Gastrocnemius medialis (tissue), 4 donors: ENCODE measurements at regions of chr21 and their contacts with region 1.

Region 1: DNA sequence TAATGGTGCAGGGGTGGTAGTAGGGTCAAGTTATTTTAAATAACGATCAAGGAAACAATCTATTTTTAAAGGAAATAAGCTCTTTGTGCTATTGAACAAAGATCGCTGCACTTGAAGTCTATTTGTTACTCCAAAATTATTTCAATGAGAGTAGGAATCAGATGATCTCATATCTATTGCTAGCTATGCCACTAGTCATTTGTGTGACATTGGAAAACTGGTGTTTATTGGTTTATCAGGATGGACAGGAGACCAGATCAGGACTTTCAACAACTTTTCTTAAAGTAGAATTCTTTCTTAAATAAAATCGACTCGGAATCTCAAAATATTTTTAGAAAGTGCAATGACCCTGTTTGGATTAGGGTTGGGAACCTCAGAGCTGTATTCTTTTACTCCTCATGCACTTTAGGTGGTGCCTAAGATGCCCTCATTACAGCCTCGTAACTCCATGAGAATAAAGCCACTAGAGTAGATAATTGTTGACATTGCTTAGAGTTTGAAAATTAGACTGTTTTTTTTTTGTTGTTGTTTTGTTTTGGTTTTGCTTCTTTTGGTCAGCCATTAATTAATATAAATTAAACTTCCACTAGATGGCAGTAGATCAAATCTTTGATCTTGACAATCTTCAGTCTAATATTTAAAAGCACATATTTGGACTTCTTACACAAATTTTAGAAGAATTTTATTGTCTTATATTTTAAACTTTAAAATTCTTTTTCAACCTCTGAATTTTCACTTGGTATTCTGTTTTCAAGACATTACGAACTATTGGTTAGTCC is 352.4 kb downstream of the USP25 start:
- DNase-seq: no peak
- ATAC-seq: no peak
- H3K4me3 ChIP-seq: peak overlapping the region in 1 of 4 donors; percentile 0
- H3K27ac ChIP-seq: no peak overlapping the region
- H3K4me1 ChIP-seq: peaks cover 3 to 4% of the 10 kb centered on the region in 2 donors
- H3K27me3 ChIP-seq: no peaks in the 10 kb centered on the region
- CTCF ChIP-seq: peak in 4 of 5 experiments; percentile 29 to 61 (median 46)
- POLR2A ChIP-seq: no peak

Region 2: GRCh38 chr21:15729674-15730483 is 352.3 kb before region 1 on chr21 and contains the start of gene USP25:
- in situ Hi-C with region 1: no loop called
- intact Hi-C with region 1: loop called (anchors 10 kb)
- DNase-seq: peak; percentile 91 to 93
- ATAC-seq: peak; percentile 86
- H3K4me3 ChIP-seq: peak within 1 kb of the TSS; percentile 60 to 83 (median 78)
- H3K27ac ChIP-seq: peak within 1 kb of the TSS; percentile 92 to 95 (median 94)
- H3K4me1 ChIP-seq: peaks cover 13 to 22% of the 10 kb centered on the region in 2 donors
- H3K27me3 ChIP-seq: no peaks in the 10 kb centered on the region
- CTCF ChIP-seq: peak in 3 of 5 experiments; percentile 16 to 42 (median 28)
- POLR2A ChIP-seq: peak; percentile 87 to 95
- total RNA-seq, gene USP25: 99.4 to 130 (median 107) TPM

Region 3: GRCh38 chr21:16323596-16323995 is 241.4 kb after region 1 on chr21:
- in situ Hi-C with region 1: loop called in 3 of 4 experiments (anchors 5 to 10 kb)
- intact Hi-C with region 1: no loop called
- DNase-seq: no peak
- ATAC-seq: no peak
- H3K4me3 ChIP-seq: no peak overlapping the region
- H3K27ac ChIP-seq: no peak overlapping the region
- H3K4me1 ChIP-seq: peaks cover 0 to 6% of the 10 kb centered on the region in 2 donors
- H3K27me3 ChIP-seq: no peaks in the 10 kb centered on the region
- CTCF ChIP-seq: no peak
- POLR2A ChIP-seq: no peak

Region 4: GRCh38 chr21:16388911-16389515 is 306.8 kb after region 1 on chr21:
- in situ Hi-C with region 1: no loop called
- intact Hi-C with region 1: no loop called
- DNase-seq: no peak
- ATAC-seq: no peak
- H3K4me3 ChIP-seq: no peak overlapping the region
- H3K27ac ChIP-seq: no peak overlapping the region
- H3K4me1 ChIP-seq: no peaks in the 10 kb centered on the region
- H3K27me3 ChIP-seq: no peaks in the 10 kb centered on the region
- CTCF ChIP-seq: no peak
- POLR2A ChIP-seq: no peak

Region 5: GRCh38 chr21:16419188-16419921 is 337.1 kb after region 1 on chr21:
- in situ Hi-C with region 1: no loop called
- intact Hi-C with region 1: loop called (anchors 10 kb)
- DNase-seq: peak; percentile 52 to 59
- ATAC-seq: peak; percentile 64 to 66
- H3K4me3 ChIP-seq: peak overlapping the region; percentile 51 to 60 (median 56)
- H3K27ac ChIP-seq: peak overlapping the region; percentile 86 to 91 (median 90)
- H3K4me1 ChIP-seq: peaks cover 4 to 15% of the 10 kb centered on the region in 2 donors
- H3K27me3 ChIP-seq: no peaks in the 10 kb centered on the region
- CTCF ChIP-seq: no peak
- POLR2A ChIP-seq: no peak

Region 6: GRCh38 chr21:16588433-16588860 is 506.2 kb after region 1 on chr21:
- in situ Hi-C with region 1: loop called in 1 of 4 experiments (anchors 25 kb)
- intact Hi-C with region 1: no loop called
- DNase-seq: peak; percentile 63 to 73
- ATAC-seq: peak; percentile 71 to 72
- H3K4me3 ChIP-seq: peak overlapping the region; percentile 47 to 55 (median 50)
- H3K27ac ChIP-seq: peak overlapping the region; percentile 74 to 80 (median 80)
- H3K4me1 ChIP-seq: peaks cover 13 to 18% of the 10 kb centered on the region in 2 donors
- H3K27me3 ChIP-seq: no peaks in the 10 kb centered on the region
- CTCF ChIP-seq: no peak
- POLR2A ChIP-seq: peak; percentile 44 to 50

Region 7: DNA sequence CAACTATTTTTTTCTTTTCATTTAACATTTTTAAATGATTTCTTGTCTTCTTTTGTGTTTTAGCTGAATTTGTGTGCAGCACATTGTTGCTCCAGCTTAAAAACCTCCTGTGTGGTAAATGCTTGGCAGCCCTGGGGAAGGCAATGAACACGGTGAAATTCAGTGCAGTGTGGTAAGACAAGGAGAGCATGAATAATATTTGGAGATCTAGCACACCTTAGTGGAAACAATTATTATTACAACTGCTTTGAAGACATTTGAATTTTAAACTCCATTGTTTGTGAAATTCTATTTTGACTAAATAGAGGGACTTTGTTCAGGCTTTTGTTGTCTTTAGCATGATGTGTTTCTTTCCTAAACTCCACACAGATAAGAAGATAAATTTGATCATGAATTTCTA is 1188.0 kb after region 1 on chr21:
- in situ Hi-C with region 1: no loop called
- intact Hi-C with region 1: loop called (anchors 2 kb)
- DNase-seq: peak in 1 of 2 donors; percentile 22
- ATAC-seq: peak; percentile 56 to 65
- H3K4me3 ChIP-seq: no peak overlapping the region
- H3K27ac ChIP-seq: no peak overlapping the region
- H3K4me1 ChIP-seq: peaks cover 0 to 4% of the 10 kb centered on the region in 2 donors
- H3K27me3 ChIP-seq: no peaks in the 10 kb centered on the region
- CTCF ChIP-seq: peak in 2 of 5 experiments; percentile 33 to 40
- POLR2A ChIP-seq: no peak